Activated naive CD4-positive, alpha-beta T cell treated with anti-CD3 and anti-CD28 coated beads, Interleukin-2, amount 10 ng/mL, durations not matched to agents 7 days and 5 days (primary cell): ENCODE measurements at regions of chr14 and their contacts with region 1.

Region 1: DNA sequence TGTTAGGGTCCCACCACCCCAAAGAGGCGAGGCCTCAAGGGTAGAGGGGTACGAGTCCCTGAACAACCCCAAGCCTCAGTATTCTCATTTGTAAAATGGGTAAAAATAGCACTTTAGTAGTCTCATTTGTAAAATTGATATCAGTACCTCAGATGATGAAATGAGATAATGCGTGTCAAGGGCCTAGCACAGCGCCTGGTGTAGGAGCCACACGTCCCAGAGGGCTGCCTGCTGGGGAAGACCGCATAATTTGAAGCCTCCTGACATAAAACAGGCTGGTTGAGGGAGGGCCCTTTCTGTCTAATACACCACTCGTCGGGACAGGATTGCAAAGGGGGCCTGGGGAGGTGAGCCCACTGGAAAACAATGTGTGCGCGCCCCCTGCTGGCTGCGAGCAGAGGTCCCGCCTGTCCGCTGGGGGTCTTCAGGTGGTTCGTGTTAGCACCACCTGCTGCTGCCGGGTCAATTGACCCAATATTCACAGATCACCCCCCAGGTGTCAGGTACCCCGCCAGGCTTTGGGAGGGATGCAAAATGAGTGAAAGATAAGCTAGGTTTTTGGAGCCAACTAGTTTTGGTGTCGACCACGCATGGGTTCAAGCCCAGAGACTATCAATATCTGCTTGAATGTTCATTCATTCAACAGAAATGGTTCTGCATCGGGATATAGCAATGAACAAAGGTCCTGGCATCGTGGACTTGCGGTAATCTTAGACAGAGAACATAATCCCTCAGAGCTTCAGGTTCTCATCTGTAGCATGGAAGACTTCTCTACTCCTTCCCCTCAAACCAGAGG is 24.7 kb upstream of the IRF2BPL start:
- DNase-seq: peak; percentile 82
- H3K4me3 Mint-ChIP-seq: no peak overlapping the region
- H3K27ac Mint-ChIP-seq: no peak overlapping the region
- H3K4me1 Mint-ChIP-seq: peaks cover 28% of the 10 kb centered on the region
- H3K27me3 Mint-ChIP-seq: no peaks in the 10 kb centered on the region

Region 2: GRCh38 chr14:76876076-76876475 is 177.2 kb before region 1 on chr14:
- CTCF ChIA-PET with region 1: interaction called, 1,049 read pairs
- DNase-seq: peak; percentile 63
- H3K4me3 Mint-ChIP-seq: no peak overlapping the region
- H3K27ac Mint-ChIP-seq: no peak overlapping the region
- H3K4me1 Mint-ChIP-seq: no peaks in the 10 kb centered on the region
- H3K27me3 Mint-ChIP-seq: peaks cover 37% of the 10 kb centered on the region

Region 3: DNA sequence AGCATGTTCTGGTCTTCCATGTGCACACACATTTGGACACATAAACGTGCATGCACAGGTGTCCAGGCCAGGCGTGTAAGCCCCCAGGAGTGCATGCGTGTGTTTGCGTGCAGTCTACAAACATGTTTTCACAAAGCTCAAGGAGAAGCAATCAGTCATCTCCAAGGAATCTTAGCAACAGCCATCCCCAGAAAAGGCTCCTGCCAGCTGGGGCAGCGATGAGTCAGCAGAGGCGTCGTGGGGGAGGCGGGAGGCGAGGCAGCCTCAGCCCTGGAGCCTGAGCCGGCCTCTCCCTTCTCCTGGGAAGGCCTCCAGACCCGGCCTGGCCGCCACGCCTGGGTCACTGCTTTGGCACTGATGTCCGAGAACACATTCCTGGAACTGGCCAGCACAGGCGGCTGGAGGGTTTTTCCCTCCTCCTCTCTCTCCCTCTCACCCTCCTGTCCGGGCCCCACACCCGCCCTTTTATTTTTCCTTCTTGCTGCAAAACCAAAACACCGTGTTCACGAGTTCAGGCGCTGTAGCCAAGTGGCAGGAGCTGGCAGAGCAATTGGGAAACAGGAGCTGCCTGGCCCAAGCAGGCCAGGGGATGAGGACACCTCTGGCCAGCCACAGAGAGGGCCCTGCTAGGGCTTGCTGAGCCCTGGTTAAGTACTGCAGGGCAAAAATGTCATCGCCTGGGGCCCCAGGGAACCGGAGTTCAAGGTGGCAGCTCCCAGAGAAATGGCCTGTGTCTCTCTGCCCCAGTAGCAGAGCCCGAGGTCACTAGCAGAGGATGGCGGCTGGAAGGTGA is 134.3 kb before region 1 on chr14:
- CTCF ChIA-PET with region 1: interaction called, 183 read pairs
- DNase-seq: no peak
- H3K4me3 Mint-ChIP-seq: no peak overlapping the region
- H3K27ac Mint-ChIP-seq: no peak overlapping the region
- H3K4me1 Mint-ChIP-seq: peaks cover 78% of the 10 kb centered on the region
- H3K27me3 Mint-ChIP-seq: peaks cover 22% of the 10 kb centered on the region

Region 4: GRCh38 chr14:76962303-76962660 is 91.0 kb before region 1 on chr14:
- CTCF ChIA-PET with region 1: interaction called, 18 read pairs
- DNase-seq: no peak
- H3K4me3 Mint-ChIP-seq: peak overlapping the region; percentile 69
- H3K27ac Mint-ChIP-seq: peak overlapping the region; percentile 96
- H3K4me1 Mint-ChIP-seq: peaks cover 90% of the 10 kb centered on the region
- H3K27me3 Mint-ChIP-seq: peaks cover 27% of the 10 kb centered on the region

Region 5: GRCh38 chr14:77033622-77034521 is 19.4 kb before region 1 on chr14:
- CTCF ChIA-PET with region 1: interaction called, 17 read pairs
- DNase-seq: peak; percentile 84
- H3K4me3 Mint-ChIP-seq: peak overlapping the region; percentile 86
- H3K27ac Mint-ChIP-seq: peak overlapping the region; percentile 92
- H3K4me1 Mint-ChIP-seq: peaks cover 91% of the 10 kb centered on the region
- H3K27me3 Mint-ChIP-seq: no peaks in the 10 kb centered on the region

Region 6: GRCh38 chr14:77076113-77076631 is 22.9 kb after region 1 on chr14:
- CTCF ChIA-PET with region 1: interaction called, 18 read pairs
- DNase-seq: no peak
- H3K4me3 Mint-ChIP-seq: no peak overlapping the region
- H3K27ac Mint-ChIP-seq: no peak overlapping the region
- H3K4me1 Mint-ChIP-seq: no peaks in the 10 kb centered on the region
- H3K27me3 Mint-ChIP-seq: peaks cover 27% of the 10 kb centered on the region